Activated CD4-positive, alpha-beta T cell treated with anti-CD3 and anti-CD28 coated beads for 36 hours (primary cell): ENCODE measurements at regions of chr15 and their contacts with region 1.

Region 1: GRCh38 chr15:34223904-34224596 is 766 bp upstream of the EMC4 start:
- DNase-seq: peak; percentile 23
- ATAC-seq: peak; percentile 10
- H3K4me3 Mint-ChIP-seq: peak overlapping the region; percentile 90
- H3K27ac Mint-ChIP-seq: peak overlapping the region; percentile 96
- H3K4me1 Mint-ChIP-seq: peaks cover 17% of the 10 kb centered on the region
- H3K27me3 Mint-ChIP-seq: no peaks in the 10 kb centered on the region

Region 2: GRCh38 chr15:33963831-33964664 is 260.0 kb before region 1 on chr15:
- CTCF ChIA-PET with region 1: no interaction called
- POLR2A ChIA-PET with region 1: interaction called, 12 read pairs
- intact Hi-C with region 1: no loop called
- DNase-seq: no peak
- ATAC-seq: no peak
- H3K4me3 Mint-ChIP-seq: no peak overlapping the region
- H3K27ac Mint-ChIP-seq: no peak overlapping the region
- H3K4me1 Mint-ChIP-seq: no peaks in the 10 kb centered on the region
- H3K27me3 Mint-ChIP-seq: no peaks in the 10 kb centered on the region

Region 3: GRCh38 chr15:34241372-34242330 is 17.6 kb after region 1 on chr15:
- CTCF ChIA-PET with region 1: interaction called, 7 read pairs
- POLR2A ChIA-PET with region 1: no interaction called
- intact Hi-C with region 1: loop called in 1 of 2 experiments (anchors 1 kb)
- DNase-seq: peak; percentile 35
- ATAC-seq: peak; percentile 68
- H3K4me3 Mint-ChIP-seq: no peak overlapping the region
- H3K27ac Mint-ChIP-seq: peak overlapping the region; percentile 39
- H3K4me1 Mint-ChIP-seq: peaks cover 33% of the 10 kb centered on the region
- H3K27me3 Mint-ChIP-seq: no peaks in the 10 kb centered on the region

Region 4: GRCh38 chr15:34259566-34259965 is 35.5 kb after region 1 on chr15:
- CTCF ChIA-PET with region 1: no interaction called
- POLR2A ChIA-PET with region 1: no interaction called
- intact Hi-C with region 1: no loop called
- DNase-seq: no peak
- ATAC-seq: no peak
- H3K4me3 Mint-ChIP-seq: no peak overlapping the region
- H3K27ac Mint-ChIP-seq: no peak overlapping the region
- H3K4me1 Mint-ChIP-seq: peaks cover 3% of the 10 kb centered on the region
- H3K27me3 Mint-ChIP-seq: no peaks in the 10 kb centered on the region

Region 5: GRCh38 chr15:34342737-34343575 is 118.9 kb after region 1 on chr15 and contains the starts of genes NOP10 and NUTM1:
- CTCF ChIA-PET with region 1: interaction called, 5 read pairs
- POLR2A ChIA-PET with region 1: no interaction called
- intact Hi-C with region 1: loop called (anchors 1 to 5 kb)
- DNase-seq: peak; percentile 97
- ATAC-seq: peak; percentile 91
- H3K4me3 Mint-ChIP-seq: no peak within 1 kb of the TSS
- H3K27ac Mint-ChIP-seq: peak within 1 kb of the TSS; percentile 88
- H3K4me1 Mint-ChIP-seq: peaks cover 30% of the 10 kb centered on the region
- H3K27me3 Mint-ChIP-seq: no peaks in the 10 kb centered on the region
- total RNA-seq, gene NOP10: 217 to 313 TPM
- total RNA-seq, gene NUTM1: not detected

Region 6: GRCh38 chr15:34987985-34988873 is 764.2 kb after region 1 on chr15 and contains the start of gene ZNF770:
- CTCF ChIA-PET with region 1: no interaction called
- POLR2A ChIA-PET with region 1: no interaction called
- intact Hi-C with region 1: loop called in 1 of 2 experiments (anchors 2 kb)
- DNase-seq: peak; percentile 88
- ATAC-seq: peak; percentile 87
- H3K4me3 Mint-ChIP-seq: peak within 1 kb of the TSS; percentile 97
- H3K27ac Mint-ChIP-seq: peak within 1 kb of the TSS; percentile 98
- H3K4me1 Mint-ChIP-seq: peaks cover 35% of the 10 kb centered on the region
- H3K27me3 Mint-ChIP-seq: no peaks in the 10 kb centered on the region
- total RNA-seq, gene ZNF770: 64.1 to 65.1 TPM